Head of caudate nucleus (tissue), 42 donors: ENCODE measurements at regions of chr10 and their contacts with region 1.

Region 1: DNA sequence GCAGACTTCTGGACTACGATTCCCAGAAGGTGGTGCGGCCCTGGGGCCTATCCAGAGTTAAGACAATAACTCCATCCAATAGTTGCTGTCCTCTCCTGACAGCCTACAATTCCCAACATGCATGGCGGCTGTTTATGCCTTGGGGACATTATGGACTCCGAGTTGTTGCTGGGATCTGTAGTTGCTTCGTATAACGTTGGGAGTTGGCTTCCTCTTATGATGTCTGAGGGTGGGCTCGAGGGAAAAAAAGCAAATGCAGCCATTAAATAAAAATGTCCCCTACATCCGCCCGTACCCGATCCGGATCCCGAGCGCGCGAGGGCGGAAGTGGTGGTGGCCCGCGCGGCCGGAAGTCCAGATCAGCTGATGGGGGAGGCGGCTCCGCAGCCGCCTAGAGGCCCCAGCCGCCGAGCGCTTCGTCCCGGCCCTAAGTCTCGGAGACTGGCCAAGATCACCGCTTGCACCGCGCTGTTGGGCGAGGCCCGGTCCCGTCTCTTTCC is at the start of gene ZSWIM8:
- DNase-seq: peak; percentile 84 to 98 (median 94)

Region 2: DNA sequence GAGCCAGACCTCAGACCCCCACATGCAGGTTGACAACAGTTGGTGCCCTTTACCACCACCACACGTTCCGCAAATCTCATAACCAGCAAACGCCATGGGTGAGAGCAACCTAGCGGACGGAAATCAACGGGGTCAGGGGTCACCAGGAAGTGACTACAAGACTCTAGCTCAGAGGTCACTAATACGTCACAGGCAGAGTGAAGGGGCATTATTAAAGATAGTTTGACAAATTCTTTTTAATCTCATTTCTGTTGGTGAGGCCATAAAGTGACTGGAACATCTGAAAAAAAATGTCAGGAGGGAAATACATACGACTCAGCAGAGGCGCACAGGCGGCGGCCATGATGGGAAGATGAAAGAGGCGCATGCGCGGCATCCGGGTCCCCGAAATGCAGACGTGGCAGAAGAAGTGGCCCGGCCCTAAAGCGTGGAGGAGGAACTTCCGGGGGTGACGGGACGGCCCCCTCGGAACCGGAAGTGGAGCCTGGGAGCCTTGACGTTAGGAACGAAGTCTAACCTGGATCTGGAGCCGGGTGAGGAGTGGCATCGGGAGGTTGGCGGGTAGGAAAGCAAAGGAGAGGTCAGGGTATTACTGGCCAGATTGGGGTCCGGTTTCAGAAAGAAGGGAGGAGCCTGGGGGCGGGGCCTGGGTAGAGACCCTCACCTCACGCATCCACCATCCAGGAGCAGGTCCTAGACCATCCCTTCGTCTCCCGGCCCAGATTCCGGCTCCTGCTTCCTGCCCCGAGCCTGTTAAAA is 41.2 kb before region 1 on chr10 and contains the start of gene SEC24C:
- intact Hi-C with region 1: loop called (anchors 5 kb)
- DNase-seq: peak; percentile 93 to 99 (median 97)

Region 3: GRCh38 chr10:73810735-73811465 is 25.6 kb after region 1 on chr10:
- intact Hi-C with region 1: loop called (anchors 1 kb)
- DNase-seq: peak in 21 of 42 donors; percentile 5 to 54 (median 23)

Region 4: DNA sequence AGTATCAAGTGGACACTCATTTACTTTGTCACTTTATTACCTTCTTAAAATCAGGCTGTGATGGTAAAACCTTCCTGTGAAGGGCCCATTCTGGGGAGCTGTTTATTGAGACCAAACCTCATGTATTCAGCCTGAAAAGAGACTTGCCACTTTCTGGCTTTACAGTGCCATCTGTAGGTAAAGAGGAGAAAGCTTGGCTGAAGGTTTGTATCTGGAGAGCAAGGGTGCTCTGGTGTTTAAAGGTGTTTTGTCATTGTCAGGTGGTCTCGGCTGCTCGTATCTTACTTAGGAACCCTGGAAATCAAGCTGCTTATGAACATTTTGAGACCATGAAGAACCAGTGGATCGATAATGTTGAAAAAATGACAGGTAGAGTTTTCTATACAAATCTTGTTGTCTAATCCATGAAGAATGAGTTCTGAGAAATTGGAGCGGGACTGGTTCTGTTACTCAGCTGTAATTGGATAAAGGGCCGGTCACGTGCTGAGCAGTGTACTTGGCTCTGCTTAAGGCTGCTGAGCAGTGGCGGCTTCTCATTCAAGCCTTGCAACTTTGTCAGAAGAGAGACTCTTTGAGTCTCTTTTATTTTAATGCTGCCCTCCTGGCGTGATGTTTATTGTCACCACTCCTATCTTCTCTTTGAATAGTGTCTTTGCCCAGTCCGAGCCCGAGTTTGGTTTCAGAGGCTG is 318.4 kb after region 1 on chr10:
- intact Hi-C with region 1: no loop called
- DNase-seq: peak in 4 of 42 donors; percentile 10 to 58 (median 46)